Activated T-helper 1 cell treated with anti-CD3 and anti-CD28 coated beads, Interleukin-12 subunit alpha, Interleukin-12 subunit beta, Interleukin-2, Interleukin-4 antibody, amounts not matched to agents 30 ng/mL and 10 ng/mL and 1 ng/mL, durations not matched to agents 14 hours and 24 hours and 36 hours (primary cell): ENCODE measurements at regions of chr10 and their contacts with region 1.

Region 1: DNA sequence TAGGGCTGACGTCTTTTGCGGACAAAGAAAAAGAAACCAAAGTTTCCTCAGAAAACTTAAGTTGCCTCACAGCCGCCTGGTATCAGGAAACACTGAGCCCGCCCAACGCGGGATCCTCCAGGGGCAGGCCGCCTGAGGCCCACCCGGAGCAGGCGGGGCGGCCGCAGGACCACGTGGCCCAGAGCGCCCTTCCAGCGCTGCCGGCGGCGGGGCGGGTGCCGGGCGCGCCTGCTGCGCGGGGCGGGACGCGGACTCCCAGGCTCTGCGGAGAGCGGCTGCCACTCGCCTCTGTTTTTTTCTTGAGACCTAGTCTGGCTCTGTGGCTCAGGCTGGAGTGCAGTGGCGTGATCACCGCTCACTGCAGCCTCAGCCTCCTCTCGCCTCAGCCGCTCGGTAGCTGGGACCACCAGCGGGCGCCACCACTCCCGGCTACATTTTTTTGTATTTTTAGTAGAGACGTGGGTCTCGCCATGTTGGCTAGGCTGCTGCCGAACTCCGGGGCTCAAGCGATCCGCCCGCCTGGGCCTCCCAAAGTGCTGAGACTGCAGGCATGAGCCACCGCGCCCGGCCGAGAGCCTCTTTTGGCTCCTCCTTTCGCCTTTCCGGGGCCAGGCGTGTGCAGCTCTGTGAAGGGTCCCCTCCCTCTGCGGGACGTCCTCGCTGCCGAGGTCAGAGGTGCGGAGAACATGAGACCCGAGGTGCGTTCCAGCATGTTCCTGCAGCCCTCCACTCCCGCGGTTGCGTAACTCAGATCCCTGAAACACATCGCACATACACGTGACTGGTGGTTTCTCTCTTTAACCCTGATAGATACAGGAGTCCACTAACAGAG is 11.6 kb upstream of the HNRNPF start:
- DNase-seq: peak; percentile 78
- H3K4me3 Mint-ChIP-seq: peak overlapping the region; percentile 85
- H3K27ac Mint-ChIP-seq: peak overlapping the region; percentile 99
- H3K4me1 Mint-ChIP-seq: peaks cover 45% of the 10 kb centered on the region
- H3K27me3 Mint-ChIP-seq: no peaks in the 10 kb centered on the region

Region 2: DNA sequence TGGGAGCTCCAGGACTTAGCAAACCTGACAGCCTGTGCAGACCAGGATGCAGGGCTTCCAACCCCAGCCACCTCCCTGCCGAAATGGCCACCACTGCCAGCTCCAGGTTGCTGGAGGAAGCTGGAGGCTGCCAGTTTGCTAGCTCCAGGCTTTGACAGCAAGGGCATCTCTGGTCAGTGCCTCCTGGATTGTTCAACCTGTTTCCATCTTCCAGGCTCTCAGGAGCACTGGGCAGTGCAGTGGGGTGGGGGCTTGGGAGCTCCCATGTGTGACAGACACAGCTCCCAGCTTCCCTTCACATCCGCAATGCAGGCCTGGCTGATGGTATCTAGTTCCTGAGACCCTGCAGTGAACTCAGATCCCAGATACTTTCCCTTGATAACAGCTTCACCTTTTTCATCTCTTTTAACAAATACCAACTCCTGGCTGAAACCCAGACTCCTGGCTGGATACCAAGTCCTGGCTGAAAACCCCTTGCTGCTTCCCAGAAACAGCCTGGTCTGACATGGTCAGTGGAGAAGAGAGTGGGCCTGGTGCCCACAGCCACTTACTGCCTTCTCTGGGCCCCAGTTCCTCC is 364.5 kb before region 1 on chr10:
- intact Hi-C with region 1: no loop called
- DNase-seq: no peak
- H3K4me3 Mint-ChIP-seq: no peak overlapping the region
- H3K27ac Mint-ChIP-seq: no peak overlapping the region
- H3K4me1 Mint-ChIP-seq: no peaks in the 10 kb centered on the region
- H3K27me3 Mint-ChIP-seq: peaks cover 4% of the 10 kb centered on the region

Region 3: GRCh38 chr10:43407576-43408330 is 12.8 kb before region 1 on chr10:
- intact Hi-C with region 1: loop called (anchors 1 kb)
- DNase-seq: peak; percentile 81
- H3K4me3 Mint-ChIP-seq: peak overlapping the region; percentile 99
- H3K27ac Mint-ChIP-seq: peak overlapping the region; percentile 100
- H3K4me1 Mint-ChIP-seq: peaks cover 42% of the 10 kb centered on the region
- H3K27me3 Mint-ChIP-seq: no peaks in the 10 kb centered on the region